Left cardiac atrium (tissue), 4 donors: ENCODE measurements at regions of chr19 and their contacts with region 1.

Region 1: GRCh38 chr19:10251792-10252694 is at the start of gene MRPL4:
- DNase-seq: peak; percentile 98
- ATAC-seq: peak; percentile 97
- total RNA-seq, gene MRPL4: 60.2 to 68.5 TPM

Region 2: GRCh38 chr19:10112895-10113591 is 139.0 kb before region 1 on chr19:
- intact Hi-C with region 1: no loop called
- DNase-seq: no peak
- ATAC-seq: peak; percentile 30 to 38

Region 3: DNA sequence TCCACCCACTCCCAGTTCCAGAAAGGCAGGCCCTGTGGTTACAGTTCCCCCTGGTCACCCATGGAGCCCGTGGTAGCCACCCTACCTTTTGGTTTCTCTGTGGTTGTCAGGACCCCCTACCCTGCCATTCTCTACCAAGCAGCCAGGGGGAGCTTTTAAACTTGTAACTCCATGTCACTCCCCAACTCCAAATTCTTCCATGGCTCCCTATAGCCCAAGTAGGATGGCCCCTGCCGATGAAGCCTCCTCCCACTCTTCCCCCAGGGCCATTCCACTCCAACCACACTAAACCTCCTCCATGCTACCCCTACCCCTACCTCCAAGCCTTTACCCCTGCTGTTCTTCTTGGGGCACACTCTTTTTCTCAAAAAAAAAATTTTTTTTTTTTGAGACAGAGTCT is 23.1 kb before region 1 on chr19:
- intact Hi-C with region 1: loop called in 1 of 2 experiments (anchors 2 kb)
- DNase-seq: no peak
- ATAC-seq: no peak

Region 4: DNA sequence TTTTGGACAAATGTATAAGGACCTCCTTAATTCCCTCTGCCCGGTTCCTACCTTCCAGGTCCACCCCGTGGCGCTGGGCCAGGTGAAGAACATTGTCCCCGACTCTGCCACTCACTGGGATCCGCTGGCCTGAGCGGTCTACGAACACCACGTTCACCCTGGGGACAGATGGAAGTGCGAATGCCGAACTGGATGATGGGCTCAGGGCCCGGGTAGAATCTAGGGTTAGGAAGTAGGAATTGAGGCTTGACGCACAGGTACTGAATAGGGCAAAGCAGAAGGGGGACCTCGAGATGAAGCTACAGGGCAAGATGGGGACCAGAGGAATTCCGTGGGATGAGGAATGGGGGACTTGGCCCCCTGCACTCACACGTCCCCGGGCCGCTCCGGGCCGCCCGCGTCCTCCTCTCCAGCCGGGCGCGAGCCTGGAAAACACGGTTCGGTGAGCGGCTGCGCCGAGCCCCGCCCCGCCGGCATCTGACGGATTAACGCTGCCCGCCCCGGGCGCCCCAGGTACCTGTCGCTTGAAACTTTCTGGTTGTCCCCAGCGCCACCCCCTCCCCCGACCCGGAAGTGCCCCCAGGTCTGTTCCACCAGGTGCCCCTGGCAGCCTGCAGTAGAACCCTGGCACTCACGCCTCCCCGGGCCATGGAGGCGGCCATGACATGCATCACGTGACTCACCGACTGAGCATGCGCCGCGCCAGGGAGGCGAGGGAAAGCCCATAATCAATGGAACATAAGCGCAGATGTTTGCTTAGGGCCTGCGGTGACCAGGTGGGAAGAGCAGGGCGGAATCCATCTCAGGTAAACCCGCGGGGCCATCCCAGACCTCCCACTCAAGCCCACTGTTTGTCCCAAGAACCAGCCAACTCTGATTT is 63.5 kb after region 1 on chr19 and contains the start of gene FDX2:
- intact Hi-C with region 1: no loop called
- DNase-seq: peak; percentile 90
- ATAC-seq: peak; percentile 91 to 94
- total RNA-seq, gene FDX2: 14.1 to 18.2 TPM